HepG2 (cell line): ENCODE measurements at regions of chr2 and their contacts with region 1.

Region 1: GRCh38 chr2:84946204-84947009 is 24.6 kb upstream of the KCMF1 start:
- DNase-seq: peak; percentile 96
- ATAC-seq: peak; percentile 97
- H3K4me3 ChIP-seq: peak overlapping the region; percentile 18 to 62 (median 48); a peak in 5 of 6 replicates
- H3K27ac ChIP-seq: peak overlapping the region; percentile 71
- H3K4me1 ChIP-seq: peaks cover 57% of the 10 kb centered on the region
- H3K27me3 ChIP-seq: no peaks in the 10 kb centered on the region
- CTCF ChIP-seq: peak; percentile 49
- EP300 ChIP-seq: peak in 1 of 2 experiments; percentile 66; a peak in 2 of 4 replicates
- POLR2A ChIP-seq: peak in 1 of 2 experiments; percentile 87; a peak in 3 of 4 replicates
- RAD21 ChIP-seq: peak; percentile 29; the same call in 1 of the 2 replicates

Region 2: GRCh38 chr2:84781942-84782716 is 164.3 kb before region 1 on chr2:
- CTCF ChIA-PET with region 1: no interaction called
- POLR2A ChIA-PET with region 1: no interaction called
- in situ Hi-C with region 1: no loop called
- intact Hi-C with region 1: no loop called
- DNase-seq: no peak
- ATAC-seq: no peak
- H3K4me3 ChIP-seq: no peak overlapping the region
- H3K27ac ChIP-seq: no peak overlapping the region
- H3K4me1 ChIP-seq: no peaks in the 10 kb centered on the region
- H3K27me3 ChIP-seq: no peaks in the 10 kb centered on the region; a peak in 1 of 5 replicates
- CTCF ChIP-seq: no peak
- EP300 ChIP-seq: no peak
- POLR2A ChIP-seq: no peak
- RAD21 ChIP-seq: no peak

Region 3: DNA sequence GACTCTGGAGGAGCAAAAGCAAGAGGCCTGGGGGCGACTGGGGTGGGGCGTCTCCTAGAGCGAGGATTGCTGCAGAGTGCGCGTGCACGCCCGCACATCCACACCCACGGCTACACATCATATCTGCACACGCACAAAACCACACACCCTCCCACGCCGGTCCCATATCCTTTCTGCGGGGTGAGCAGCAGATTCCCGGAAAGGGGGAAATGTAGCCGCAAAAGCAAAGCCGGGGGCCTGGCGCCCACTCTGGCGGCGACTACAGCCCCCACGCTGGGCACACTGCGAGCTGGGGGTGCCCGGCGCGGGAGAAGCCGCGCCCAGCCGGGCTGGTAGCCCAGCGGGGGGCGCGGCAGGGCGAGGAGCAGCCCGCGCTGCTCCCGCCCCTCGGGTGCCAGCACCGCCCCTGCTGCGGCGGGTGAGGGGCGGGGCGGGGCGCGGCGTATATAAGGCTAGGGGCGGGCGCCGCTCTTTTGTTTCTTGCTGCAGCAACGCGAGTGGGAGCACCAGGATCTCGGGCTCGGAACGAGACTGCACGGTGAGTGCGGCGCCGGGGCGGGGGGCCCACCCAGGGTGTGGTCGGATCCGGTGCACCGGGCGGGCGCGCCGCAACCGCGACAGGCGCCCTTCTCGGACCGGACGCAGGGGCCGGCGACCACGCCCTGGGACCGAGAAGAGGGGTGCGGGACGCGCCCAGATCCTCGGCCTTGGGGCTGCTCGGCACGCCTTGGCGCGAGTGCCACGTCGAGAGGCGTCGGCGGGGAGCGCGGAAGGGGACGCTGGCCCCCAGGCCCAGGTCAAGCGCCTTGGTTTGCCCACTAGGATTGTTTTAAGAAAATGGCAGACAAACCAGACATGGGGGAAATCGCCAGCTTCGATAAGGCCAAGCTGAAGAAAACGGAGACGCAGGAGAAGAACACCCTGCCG is 41.0 kb before region 1 on chr2 and contains the start of gene TMSB10:
- CTCF ChIA-PET with region 1: no interaction called
- POLR2A ChIA-PET with region 1: interaction called, 17 read pairs
- in situ Hi-C with region 1: no loop called
- intact Hi-C with region 1: no loop called
- DNase-seq: peak; percentile 73
- ATAC-seq: peak; percentile 88
- H3K4me3 ChIP-seq: peak within 1 kb of the TSS; percentile 90 to 98 (median 98)
- H3K27ac ChIP-seq: peak within 1 kb of the TSS; percentile 65
- H3K4me1 ChIP-seq: peaks cover 31% of the 10 kb centered on the region
- H3K27me3 ChIP-seq: peaks cover 2 to 32% of the 10 kb centered on the region in 2 experiments; a peak in 2 of 5 replicates
- CTCF ChIP-seq: peak; percentile 35; the same call in 1 of the 2 replicates
- EP300 ChIP-seq: peak in 1 of 2 experiments; percentile 29; a peak in 1 of 4 replicates
- POLR2A ChIP-seq: peak; percentile 87 to 99
- RAD21 ChIP-seq: peak; percentile 61
- total RNA-seq, gene TMSB10: 708 and 754 TPM in 2 replicates

Region 4: GRCh38 chr2:84919885-84920580 is 26.4 kb before region 1 on chr2:
- CTCF ChIA-PET with region 1: no interaction called
- POLR2A ChIA-PET with region 1: interaction called, 37 read pairs
- in situ Hi-C with region 1: no loop called
- intact Hi-C with region 1: no loop called
- DNase-seq: peak; percentile 95
- ATAC-seq: peak; percentile 91
- H3K4me3 ChIP-seq: peak overlapping the region; percentile 32 to 56 (median 48)
- H3K27ac ChIP-seq: peak overlapping the region; percentile 72
- H3K4me1 ChIP-seq: peaks cover 35% of the 10 kb centered on the region
- H3K27me3 ChIP-seq: no peaks in the 10 kb centered on the region
- CTCF ChIP-seq: no peak
- EP300 ChIP-seq: peak; percentile 28 to 79; a peak in 2 of 4 replicates
- POLR2A ChIP-seq: peak; percentile 35 to 53; a peak in 2 of 4 replicates
- RAD21 ChIP-seq: no peak

Region 5: DNA sequence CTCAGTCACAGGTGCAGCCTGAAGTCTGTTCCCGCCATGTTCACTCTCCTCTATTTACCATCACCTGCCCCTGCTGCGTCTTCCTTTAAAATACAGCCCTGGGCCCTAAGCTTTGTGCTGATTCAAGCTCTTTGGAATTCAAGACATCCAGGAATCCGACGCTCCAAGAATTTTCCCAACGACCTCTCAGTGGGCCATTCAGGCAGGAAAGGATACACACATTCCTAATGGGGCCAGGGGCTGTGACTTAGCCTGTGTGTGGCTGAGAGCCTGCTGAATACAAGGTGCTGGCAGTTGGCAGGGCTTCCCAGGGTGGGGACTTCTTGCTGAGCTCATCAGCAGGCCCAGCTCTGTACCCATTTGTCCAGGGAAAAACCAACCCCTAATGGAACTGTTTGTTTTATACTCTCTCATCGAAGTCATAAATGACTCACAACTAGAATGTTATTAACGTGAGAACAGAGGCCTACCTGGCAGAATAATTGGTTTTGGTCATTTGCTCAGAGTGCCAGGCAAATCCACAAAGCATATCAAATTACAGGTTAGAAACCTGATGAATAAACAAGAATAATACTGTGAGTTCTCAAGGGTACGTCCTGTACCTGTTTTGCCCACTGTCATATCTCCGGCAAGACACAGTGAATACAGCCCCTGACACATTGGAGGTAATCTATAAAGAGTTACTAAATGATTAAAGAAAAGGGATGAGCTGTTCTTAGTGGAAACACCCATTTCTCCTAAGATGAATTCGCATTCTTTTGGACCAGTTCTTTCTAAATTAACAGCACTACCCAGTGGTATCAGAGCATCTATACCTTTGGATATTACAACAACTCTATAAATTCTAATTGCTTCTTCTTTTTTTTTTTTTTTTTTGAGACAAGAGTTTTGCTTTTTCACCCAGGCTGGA is 12.0 kb after region 1 on chr2:
- CTCF ChIA-PET with region 1: no interaction called
- POLR2A ChIA-PET with region 1: interaction called, 28 read pairs
- in situ Hi-C with region 1: no loop called
- intact Hi-C with region 1: no loop called
- DNase-seq: peak; percentile 80
- ATAC-seq: peak; percentile 60
- H3K4me3 ChIP-seq: 0 out of 6 replicates have a peak overlapping the region, but pooled peaks of 1 of the 3 experiments have one; percentile 0
- H3K27ac ChIP-seq: peak overlapping the region; percentile 5
- H3K4me1 ChIP-seq: peaks cover 79% of the 10 kb centered on the region
- H3K27me3 ChIP-seq: no peaks in the 10 kb centered on the region
- CTCF ChIP-seq: no peak
- EP300 ChIP-seq: no peak
- POLR2A ChIP-seq: no peak
- RAD21 ChIP-seq: no peak

Region 6: DNA sequence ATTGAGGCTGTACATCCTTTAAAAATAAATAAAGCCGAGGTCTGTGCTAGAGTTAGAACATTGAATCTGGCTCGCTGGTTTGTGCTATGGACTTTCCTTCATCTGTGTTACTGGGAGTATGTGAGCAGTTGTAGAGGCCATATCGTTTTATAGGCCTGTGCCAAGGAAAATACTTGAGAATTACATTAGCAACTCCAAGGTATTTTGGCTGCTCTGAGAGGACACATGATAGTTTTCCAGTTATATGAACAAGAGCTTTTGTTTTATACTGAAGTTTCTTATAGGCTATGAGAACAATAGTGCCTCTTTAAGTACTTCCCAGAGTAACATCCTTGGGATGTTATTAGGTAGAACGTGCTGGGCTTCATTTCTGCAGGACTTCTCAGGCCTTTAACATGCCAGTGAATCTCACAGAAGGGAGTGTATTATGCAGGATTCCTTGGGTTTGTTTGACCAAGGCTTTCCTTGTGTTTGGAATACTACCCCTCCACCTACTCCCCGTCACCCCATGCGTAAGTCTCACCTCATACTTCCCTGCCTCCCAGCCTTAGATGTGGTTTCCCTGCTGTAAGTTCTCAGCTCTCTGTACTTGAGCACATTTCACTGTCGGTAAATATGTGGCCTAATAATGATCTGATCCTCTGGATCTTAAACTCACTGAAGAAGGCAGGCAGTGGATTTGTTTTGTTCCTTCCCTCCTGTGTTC is 207.8 kb after region 1 on chr2:
- CTCF ChIA-PET with region 1: no interaction called
- POLR2A ChIA-PET with region 1: no interaction called
- in situ Hi-C with region 1: no loop called
- intact Hi-C with region 1: no loop called
- DNase-seq: no peak
- ATAC-seq: no peak
- H3K4me3 ChIP-seq: no peak overlapping the region
- H3K27ac ChIP-seq: no peak overlapping the region
- H3K4me1 ChIP-seq: no peaks in the 10 kb centered on the region
- H3K27me3 ChIP-seq: peaks cover 0 to 40% of the 10 kb centered on the region in 2 experiments; a peak in 3 of 5 replicates
- CTCF ChIP-seq: no peak
- EP300 ChIP-seq: no peak
- POLR2A ChIP-seq: no peak
- RAD21 ChIP-seq: no peak